ENCODE measurements at regions of chr18 and their contacts with region 1.

Region 1: GRCh38 chr18:2805970-2806943 is 40.5 kb upstream of the EMILIN2 start:
- DNase-seq: no peak
- ATAC-seq: no peak

Region 2: GRCh38 chr18:2906704-2907549 is 100.7 kb after region 1 on chr18:
- intact Hi-C with region 1: loop called in 1 of 2 experiments (anchors 10 kb)
- DNase-seq: peak; percentile 45
- ATAC-seq: peak; percentile 44 to 46